ENCODE measurements at regions of chr9 and their contacts with region 1.

Region 1: GRCh38 chr9:35981699-35982098 is 23.7 kb upstream of the OR2S2 start:
- DNase-seq: no peak
- H3K4me3 ChIP-seq: no peak overlapping the region
- H3K4me3 Mint-ChIP-seq: no peak overlapping the region
- H3K27ac ChIP-seq: no peak overlapping the region
- H3K27ac Mint-ChIP-seq: no peak overlapping the region
- H3K4me1 ChIP-seq: no peaks in the 10 kb centered on the region
- H3K4me1 Mint-ChIP-seq: peaks cover 0 to 7% (median 0%) of the 10 kb centered on the region in 4 donors
- H3K27me3 ChIP-seq: peaks cover 16% of the 10 kb centered on the region
- H3K27me3 Mint-ChIP-seq: peaks cover 35 to 51% of the 10 kb centered on the region in 2 donors

Region 2: GRCh38 chr9:35211854-35212253 is 769.8 kb before region 1 on chr9:
- CTCF ChIA-PET with region 1: no interaction called
- POLR2A ChIA-PET with region 1: no interaction called
- intact Hi-C with region 1: loop called (anchors 5 kb)
- DNase-seq: no peak
- H3K4me3 ChIP-seq: no peak overlapping the region
- H3K4me3 Mint-ChIP-seq: no peak overlapping the region
- H3K27ac ChIP-seq: no peak overlapping the region
- H3K27ac Mint-ChIP-seq: no peak overlapping the region
- H3K4me1 ChIP-seq: no peaks in the 10 kb centered on the region
- H3K4me1 Mint-ChIP-seq: no peaks in the 10 kb centered on the region
- H3K27me3 ChIP-seq: no peaks in the 10 kb centered on the region
- H3K27me3 Mint-ChIP-seq: peaks cover 0 to 2% of the 10 kb centered on the region in 2 donors

Measured in CD4-positive, alpha-beta memory T cell (primary cell).